ENCODE measurements at regions of chr9 and their contacts with region 1.

Region 1: DNA sequence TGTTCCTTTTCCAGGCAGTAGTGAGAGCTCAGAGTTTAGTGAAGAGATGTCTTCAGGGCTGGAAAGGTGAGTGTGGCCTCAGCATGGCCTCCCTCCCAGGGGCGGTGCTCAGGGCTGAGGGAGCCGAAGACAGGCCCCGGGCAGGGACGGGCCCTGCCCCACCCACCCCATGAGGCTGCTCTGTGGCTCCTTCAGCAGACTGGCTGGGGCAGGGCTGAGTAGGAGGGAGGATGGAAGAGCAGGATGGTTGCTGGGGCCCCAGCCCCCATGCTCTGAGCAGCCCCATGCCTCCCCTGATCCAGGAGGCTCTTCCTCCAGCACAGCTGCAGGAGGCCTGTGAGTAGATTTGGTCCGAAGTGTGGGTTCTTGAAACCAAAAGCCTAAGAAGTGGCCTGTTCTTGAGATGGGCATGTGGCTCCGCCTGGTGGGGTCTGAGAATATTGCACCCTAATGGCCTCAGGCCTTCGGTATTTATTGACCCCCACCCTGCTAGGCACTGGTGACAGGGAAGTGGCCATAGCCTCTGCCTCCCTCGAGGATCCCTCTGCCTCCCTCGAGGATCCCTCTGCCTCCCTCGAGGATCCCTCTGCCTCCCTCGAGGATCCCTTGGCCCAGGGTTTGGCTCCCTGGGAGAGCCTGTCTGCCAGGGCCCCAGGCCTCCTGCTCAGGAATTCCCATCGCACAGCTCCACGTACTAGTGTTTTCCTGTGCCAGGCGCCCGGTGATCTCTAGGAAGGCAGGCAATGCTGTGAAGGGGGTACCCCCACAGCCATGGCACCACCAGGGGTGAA is 65.4 kb upstream of the GARNL3 start:
- DNase-seq: peak; percentile 71
- ATAC-seq: peak; percentile 93
- H3K4me3 ChIP-seq: no peak overlapping the region
- H3K27ac ChIP-seq: no peak overlapping the region
- H3K4me1 ChIP-seq: peaks cover 6% of the 10 kb centered on the region
- H3K27me3 ChIP-seq: no peaks in the 10 kb centered on the region
- CTCF ChIP-seq: peak; percentile 92 to 98 (median 96)
- EP300 ChIP-seq: no peak
- POLR2A ChIP-seq: no peak
- RAD21 ChIP-seq: peak; percentile 100

Region 2: GRCh38 chr9:126947529-126947928 is 251.7 kb before region 1 on chr9:
- CTCF ChIA-PET with region 1: interaction called, 172 read pairs
- POLR2A ChIA-PET with region 1: no interaction called
- RAD21 ChIA-PET with region 1: interaction called, 91 read pairs
- SMC1A ChIA-PET with region 1: interaction called, 83 read pairs
- in situ Hi-C with region 1: loop called (anchors 5 kb)
- intact Hi-C with region 1: no loop called
- DNase-seq: no peak
- ATAC-seq: peak; percentile 66
- H3K4me3 ChIP-seq: no peak overlapping the region
- H3K27ac ChIP-seq: no peak overlapping the region
- H3K4me1 ChIP-seq: no peaks in the 10 kb centered on the region
- H3K27me3 ChIP-seq: no peaks in the 10 kb centered on the region
- CTCF ChIP-seq: peak; percentile 36 to 56 (median 45); a peak in 4 of 6 replicates
- EP300 ChIP-seq: no peak
- POLR2A ChIP-seq: no peak
- RAD21 ChIP-seq: peak; percentile 59

Region 3: GRCh38 chr9:126965541-126966428 is 233.4 kb before region 1 on chr9:
- CTCF ChIA-PET with region 1: interaction called, 174 read pairs
- POLR2A ChIA-PET with region 1: interaction called, 7 read pairs
- RAD21 ChIA-PET with region 1: interaction called, 63 read pairs
- SMC1A ChIA-PET with region 1: interaction called, 124 read pairs
- in situ Hi-C with region 1: loop called (anchors 5 kb)
- intact Hi-C with region 1: loop called (anchors 1 kb)
- DNase-seq: no peak
- ATAC-seq: peak; percentile 99
- H3K4me3 ChIP-seq: no peak overlapping the region
- H3K27ac ChIP-seq: no peak overlapping the region
- H3K4me1 ChIP-seq: no peaks in the 10 kb centered on the region
- H3K27me3 ChIP-seq: no peaks in the 10 kb centered on the region
- CTCF ChIP-seq: peak; percentile 82 to 84 (median 83)
- EP300 ChIP-seq: no peak
- POLR2A ChIP-seq: no peak
- RAD21 ChIP-seq: peak; percentile 95

Region 4: GRCh38 chr9:127058011-127058644 is 141.1 kb before region 1 on chr9:
- CTCF ChIA-PET with region 1: no interaction called
- POLR2A ChIA-PET with region 1: interaction called, 3 read pairs
- RAD21 ChIA-PET with region 1: interaction called, 6 read pairs
- SMC1A ChIA-PET with region 1: interaction called, 18 read pairs
- in situ Hi-C with region 1: no loop called
- intact Hi-C with region 1: no loop called
- DNase-seq: no peak
- ATAC-seq: no peak
- H3K4me3 ChIP-seq: no peak overlapping the region
- H3K27ac ChIP-seq: no peak overlapping the region
- H3K4me1 ChIP-seq: peaks cover 5% of the 10 kb centered on the region
- H3K27me3 ChIP-seq: no peaks in the 10 kb centered on the region
- CTCF ChIP-seq: no peak
- EP300 ChIP-seq: no peak
- POLR2A ChIP-seq: no peak
- RAD21 ChIP-seq: no peak

Region 5: DNA sequence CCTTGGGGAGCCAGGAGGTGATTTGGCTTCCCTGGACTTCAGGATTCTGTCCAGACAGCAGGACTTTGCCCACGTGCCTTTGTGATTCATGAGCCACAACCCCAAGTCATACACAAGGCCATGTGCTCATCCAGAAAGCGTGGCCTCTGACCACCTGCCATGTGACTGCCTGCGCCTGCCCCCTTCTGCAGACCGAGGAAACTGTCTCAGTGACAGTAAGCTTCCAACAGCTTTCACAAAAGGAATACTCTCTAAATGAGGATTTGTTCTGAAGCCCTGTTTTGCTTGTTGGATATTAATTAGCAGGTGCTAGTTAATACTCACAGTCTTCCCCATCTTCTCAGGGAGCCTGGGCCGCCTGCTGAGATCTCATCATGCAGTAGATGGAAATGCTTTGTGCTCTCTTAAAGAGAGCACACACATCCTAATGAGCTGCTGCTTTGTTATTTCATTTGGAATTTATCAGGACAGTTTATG is 39.8 kb before region 1 on chr9:
- CTCF ChIA-PET with region 1: interaction called, 9 read pairs
- POLR2A ChIA-PET with region 1: no interaction called
- RAD21 ChIA-PET with region 1: interaction called, 226 read pairs
- SMC1A ChIA-PET with region 1: interaction called, 812 read pairs
- in situ Hi-C with region 1: no loop called
- intact Hi-C with region 1: loop called (anchors 5 kb)
- DNase-seq: no peak
- ATAC-seq: peak; percentile 30; the same call in 2 of the 3 replicates
- H3K4me3 ChIP-seq: no peak overlapping the region
- H3K27ac ChIP-seq: no peak overlapping the region
- H3K4me1 ChIP-seq: peaks cover 27% of the 10 kb centered on the region
- H3K27me3 ChIP-seq: no peaks in the 10 kb centered on the region
- CTCF ChIP-seq: peak in 1 of 3 experiments; percentile 16; a peak in 1 of 6 replicates
- EP300 ChIP-seq: no peak
- POLR2A ChIP-seq: no peak
- RAD21 ChIP-seq: no peak; the same call in 1 of the 2 replicates

Region 6: GRCh38 chr9:127172026-127172707 is 27.0 kb before region 1 on chr9:
- CTCF ChIA-PET with region 1: interaction called, 84 read pairs
- POLR2A ChIA-PET with region 1: interaction called, 29 read pairs
- RAD21 ChIA-PET with region 1: interaction called, 226 read pairs
- SMC1A ChIA-PET with region 1: interaction called, 812 read pairs
- in situ Hi-C with region 1: no loop called
- intact Hi-C with region 1: loop called (anchors 1 kb)
- DNase-seq: no peak
- ATAC-seq: no peak
- H3K4me3 ChIP-seq: no peak overlapping the region
- H3K27ac ChIP-seq: no peak overlapping the region
- H3K4me1 ChIP-seq: peaks cover 6% of the 10 kb centered on the region
- H3K27me3 ChIP-seq: no peaks in the 10 kb centered on the region
- CTCF ChIP-seq: no peak
- EP300 ChIP-seq: no peak
- POLR2A ChIP-seq: no peak
- RAD21 ChIP-seq: no peak

Region 7: DNA sequence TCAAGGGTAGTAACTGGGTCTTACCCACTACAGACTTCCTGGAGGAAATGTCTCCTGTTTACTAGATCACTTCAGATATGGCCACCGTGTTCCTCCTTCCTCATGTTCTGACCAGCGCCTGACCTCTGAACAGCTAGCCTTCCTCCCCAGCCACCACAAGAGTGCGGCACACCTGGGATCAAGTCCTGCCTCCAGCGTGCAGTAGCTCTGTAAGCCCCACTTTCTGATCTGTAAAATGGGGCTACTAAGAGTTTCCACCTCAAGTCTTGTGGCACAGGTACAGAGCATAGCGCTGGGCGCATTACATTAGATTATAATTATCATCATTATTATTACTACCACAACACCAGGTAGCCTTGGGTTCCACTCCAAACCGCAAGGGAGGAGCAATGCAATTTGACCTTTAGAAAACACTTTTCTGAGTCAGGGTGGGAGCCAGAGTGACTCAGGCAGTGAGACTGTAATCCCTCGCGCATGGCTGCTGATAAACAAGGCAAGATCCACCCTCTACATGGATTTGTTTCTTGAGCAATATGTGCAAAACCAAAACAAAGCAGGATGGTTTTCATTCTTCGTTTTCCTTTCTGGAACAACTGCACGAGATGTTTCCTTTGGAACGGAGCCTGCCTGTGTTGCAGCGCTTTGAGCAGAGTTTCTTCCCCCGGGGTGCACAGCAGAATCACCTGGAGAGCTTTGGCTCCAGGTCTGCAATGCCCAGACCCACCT is 11.8 kb before region 1 on chr9:
- CTCF ChIA-PET with region 1: interaction called, 38 read pairs
- POLR2A ChIA-PET with region 1: interaction called, 38 read pairs
- RAD21 ChIA-PET with region 1: interaction called, 101 read pairs
- SMC1A ChIA-PET with region 1: interaction called, 86 read pairs
- in situ Hi-C with region 1: no loop called
- intact Hi-C with region 1: loop called (anchors 1 kb)
- DNase-seq: no peak
- ATAC-seq: no peak
- H3K4me3 ChIP-seq: no peak overlapping the region
- H3K27ac ChIP-seq: no peak overlapping the region
- H3K4me1 ChIP-seq: peaks cover 26% of the 10 kb centered on the region
- H3K27me3 ChIP-seq: no peaks in the 10 kb centered on the region
- CTCF ChIP-seq: no peak
- EP300 ChIP-seq: no peak
- POLR2A ChIP-seq: no peak
- RAD21 ChIP-seq: no peak

Region 8: GRCh38 chr9:127283917-127284316 is 84.7 kb after region 1 on chr9:
- CTCF ChIA-PET with region 1: no interaction called
- POLR2A ChIA-PET with region 1: no interaction called
- RAD21 ChIA-PET with region 1: no interaction called
- SMC1A ChIA-PET with region 1: no interaction called
- in situ Hi-C with region 1: no loop called
- intact Hi-C with region 1: no loop called
- DNase-seq: no peak
- ATAC-seq: peak; percentile 61; the same call in 2 of the 3 replicates
- H3K4me3 ChIP-seq: no peak overlapping the region
- H3K27ac ChIP-seq: no peak overlapping the region
- H3K4me1 ChIP-seq: peaks cover 6% of the 10 kb centered on the region
- H3K27me3 ChIP-seq: no peaks in the 10 kb centered on the region
- CTCF ChIP-seq: peak; percentile 26 to 48 (median 42); a peak in 5 of 6 replicates
- EP300 ChIP-seq: no peak
- POLR2A ChIP-seq: no peak
- RAD21 ChIP-seq: peak; percentile 54

Measured in GM12878 (cell line).